ENCODE measurements at regions of chr2 and their contacts with region 1.

Region 1: DNA sequence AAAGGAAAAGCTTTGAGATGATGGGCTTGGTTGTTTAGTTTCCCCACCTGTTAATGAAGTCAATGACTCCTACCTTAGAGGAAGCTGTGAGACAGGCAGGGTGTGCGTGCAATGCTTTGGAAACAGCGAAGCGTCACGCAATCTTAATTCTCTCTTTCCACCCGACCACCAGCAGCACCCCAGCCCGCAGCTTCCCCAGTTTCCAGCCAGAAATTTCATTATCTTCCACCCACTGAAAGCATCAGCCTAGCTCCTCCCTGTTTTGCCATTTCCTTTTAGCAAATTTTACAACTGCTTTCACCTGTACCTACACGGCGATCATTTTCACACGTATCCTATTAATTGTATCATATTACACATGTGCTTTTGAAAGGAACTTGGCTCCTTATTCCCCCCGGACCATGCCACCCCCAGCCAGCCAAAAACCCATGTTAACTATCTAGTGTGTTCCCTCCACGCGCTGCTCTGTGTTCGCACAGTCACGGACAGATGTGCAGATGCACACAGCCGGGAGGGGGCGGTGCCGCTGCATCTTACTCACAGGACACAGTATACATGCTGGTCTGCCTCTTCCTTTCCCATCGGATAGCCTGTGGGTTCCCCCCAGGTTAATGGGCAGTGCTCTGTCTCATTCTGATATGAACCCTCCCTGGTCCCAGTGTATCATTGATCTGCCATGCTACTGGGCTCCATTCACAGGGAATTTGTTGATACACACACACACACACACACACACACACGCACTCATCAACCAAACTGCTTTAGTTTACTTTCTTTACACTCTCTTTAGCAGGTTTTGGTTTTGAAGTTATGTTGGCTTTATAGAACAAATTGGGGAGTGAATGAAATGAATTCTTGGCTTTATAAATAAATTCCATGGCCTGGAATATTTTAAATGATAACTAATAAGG is 22.4 kb downstream of the CYP27C1 start:
- DNase-seq: no peak
- H3K4me3 ChIP-seq: no peak overlapping the region
- H3K27ac ChIP-seq: no peak overlapping the region
- H3K4me1 ChIP-seq: no peaks in the 10 kb centered on the region
- H3K27me3 ChIP-seq: no peaks in the 10 kb centered on the region
- CTCF ChIP-seq: peak; percentile 42 to 63

Region 2: GRCh38 chr2:126953483-126953882 is 244.2 kb before region 1 on chr2:
- CTCF ChIA-PET with region 1: no interaction called
- dilution Hi-C with region 1: no loop called
- in situ Hi-C with region 1: no loop called
- intact Hi-C with region 1: no loop called
- DNase-seq: no peak
- H3K4me3 ChIP-seq: no peak overlapping the region
- H3K27ac ChIP-seq: no peak overlapping the region
- H3K4me1 ChIP-seq: no peaks in the 10 kb centered on the region
- H3K27me3 ChIP-seq: no peaks in the 10 kb centered on the region
- CTCF ChIP-seq: no peak

Region 3: DNA sequence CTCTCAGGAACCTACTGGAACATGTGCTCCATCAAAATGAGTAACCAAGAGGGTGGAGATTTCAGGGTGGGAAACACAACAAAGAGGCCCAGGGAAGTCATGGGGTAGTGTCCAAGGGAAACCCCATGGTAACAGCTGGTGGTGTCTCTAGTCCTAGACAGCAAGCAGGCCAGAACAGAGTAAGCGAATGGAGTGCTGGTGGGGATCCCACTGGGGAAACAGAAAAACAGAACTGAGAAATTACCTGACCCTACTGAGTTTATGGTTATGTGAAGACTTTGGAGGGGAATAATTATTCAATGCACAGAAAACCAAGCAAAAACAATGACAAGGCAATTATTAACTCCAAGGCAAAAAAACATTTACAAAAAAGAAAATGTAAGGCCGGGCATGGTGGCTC is 79.3 kb after region 1 on chr2:
- CTCF ChIA-PET with region 1: no interaction called
- dilution Hi-C with region 1: loop called (anchors 5 kb)
- in situ Hi-C with region 1: no loop called
- intact Hi-C with region 1: no loop called
- DNase-seq: no peak
- H3K4me3 ChIP-seq: no peak overlapping the region
- H3K27ac ChIP-seq: no peak overlapping the region
- H3K4me1 ChIP-seq: no peaks in the 10 kb centered on the region
- H3K27me3 ChIP-seq: no peaks in the 10 kb centered on the region
- CTCF ChIP-seq: no peak

Region 4: GRCh38 chr2:127293748-127294562 is 96.2 kb after region 1 on chr2 and contains the start of gene ERCC3:
- CTCF ChIA-PET with region 1: no interaction called
- dilution Hi-C with region 1: no loop called
- in situ Hi-C with region 1: no loop called
- intact Hi-C with region 1: loop called (anchors 5 kb)
- DNase-seq: peak; percentile 66
- H3K4me3 ChIP-seq: peak within 1 kb of the TSS; percentile 75 to 87 (median 83)
- H3K27ac ChIP-seq: peak within 1 kb of the TSS; percentile 69
- H3K4me1 ChIP-seq: no peaks in the 10 kb centered on the region
- H3K27me3 ChIP-seq: no peaks in the 10 kb centered on the region
- CTCF ChIP-seq: no peak
- total RNA-seq, gene ERCC3: 34.7 to 40.0 TPM